Transverse colon (tissue), 4 donors: ENCODE measurements at regions of chr15 and their contacts with region 1.

Region 1: GRCh38 chr15:31128919-31129768 is 27.6 kb upstream of the TRPM1 start:
- DNase-seq: peak; percentile 82
- H3K4me3 ChIP-seq: no peak overlapping the region
- H3K27ac ChIP-seq: no peak overlapping the region
- H3K4me1 ChIP-seq: peaks cover 0 to 5% (median 0%) of the 10 kb centered on the region in 4 donors
- H3K27me3 ChIP-seq: no peaks in the 10 kb centered on the region
- CTCF ChIP-seq: peak; percentile 87 to 94 (median 89)
- EP300 ChIP-seq: no peak
- POLR2A ChIP-seq: no peak

Region 2: GRCh38 chr15:30650012-30650929 is 478.9 kb before region 1 on chr15:
- in situ Hi-C with region 1: loop called in 1 of 4 experiments (anchors 25 kb)
- intact Hi-C with region 1: no loop called
- DNase-seq: no peak
- H3K4me3 ChIP-seq: no peak overlapping the region
- H3K27ac ChIP-seq: no peak overlapping the region
- H3K4me1 ChIP-seq: no peaks in the 10 kb centered on the region
- H3K27me3 ChIP-seq: no peaks in the 10 kb centered on the region
- CTCF ChIP-seq: no peak
- EP300 ChIP-seq: no peak
- POLR2A ChIP-seq: no peak

Region 3: DNA sequence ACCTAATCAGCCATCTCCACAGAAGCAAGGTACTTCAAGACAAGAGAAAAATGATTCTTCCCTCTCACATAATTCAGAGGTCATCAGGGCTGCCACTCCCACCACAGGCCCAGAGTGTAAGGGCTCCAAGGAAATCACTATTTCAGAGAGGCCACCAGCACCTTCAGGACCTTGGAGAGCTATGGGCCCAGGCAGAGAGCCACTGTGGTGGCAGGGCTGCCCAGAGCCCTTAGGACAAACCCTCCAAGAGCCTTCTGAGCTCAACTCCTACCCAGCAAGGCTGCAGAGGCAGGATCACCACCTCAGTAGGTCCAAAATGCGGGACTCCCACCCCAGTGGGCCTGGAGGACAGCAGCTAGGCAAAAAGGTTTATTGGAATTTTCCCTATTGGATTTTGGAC is 243.3 kb before region 1 on chr15:
- in situ Hi-C with region 1: loop called in 2 of 4 experiments (anchors 25 kb)
- intact Hi-C with region 1: no loop called
- DNase-seq: no peak
- H3K4me3 ChIP-seq: no peak overlapping the region
- H3K27ac ChIP-seq: no peak overlapping the region
- H3K4me1 ChIP-seq: no peaks in the 10 kb centered on the region
- H3K27me3 ChIP-seq: no peaks in the 10 kb centered on the region
- CTCF ChIP-seq: no peak
- EP300 ChIP-seq: no peak
- POLR2A ChIP-seq: no peak

Region 4: DNA sequence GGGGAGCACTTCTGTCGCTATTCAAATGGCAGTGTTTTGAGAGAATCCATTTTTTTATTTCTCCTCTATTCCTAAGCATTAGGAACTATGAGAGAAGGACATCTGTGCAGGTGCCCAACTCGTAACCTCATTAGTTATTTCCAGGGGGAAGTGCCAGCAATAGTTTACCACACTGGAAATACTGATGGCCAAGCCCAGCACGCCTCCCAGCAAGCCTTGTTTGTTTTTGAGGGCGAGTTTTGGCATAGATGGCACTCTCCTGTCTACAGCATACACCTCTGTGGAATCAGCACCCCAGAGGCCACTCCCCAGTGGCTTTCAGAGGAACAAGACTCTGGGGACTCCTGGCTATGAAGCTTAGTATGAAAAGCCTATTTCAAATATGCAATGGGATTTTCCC is 188.8 kb before region 1 on chr15:
- in situ Hi-C with region 1: no loop called
- intact Hi-C with region 1: no loop called
- DNase-seq: peak; percentile 40
- H3K4me3 ChIP-seq: no peak overlapping the region
- H3K27ac ChIP-seq: no peak overlapping the region
- H3K4me1 ChIP-seq: no peaks in the 10 kb centered on the region
- H3K27me3 ChIP-seq: no peaks in the 10 kb centered on the region
- CTCF ChIP-seq: no peak
- EP300 ChIP-seq: no peak
- POLR2A ChIP-seq: no peak